ENCODE measurements at regions of chr2 and their contacts with region 1.

Region 1: GRCh38 chr2:26244309-26245121 is at the starts of genes HADHA and HADHB:
- ATAC-seq: peak; percentile 86 to 93 (median 90)
- H3K4me3 ChIP-seq: peak within 1 kb of the TSS; percentile 64 to 87 (median 85)
- H3K27ac ChIP-seq: peak within 1 kb of the TSS; percentile 100
- H3K4me1 ChIP-seq: peaks cover 3 to 14% of the 10 kb centered on the region in 2 donors
- total RNA-seq, gene HADHA: 75.1 to 152 (median 113) TPM
- total RNA-seq, gene HADHB: 29.2 to 144 (median 71.6) TPM

Region 2: GRCh38 chr2:26469092-26469710 is 224.7 kb after region 1 on chr2:
- in situ Hi-C with region 1: loop called in 1 of 9 experiments (anchors 25 kb)
- ATAC-seq: peak in 3 of 8 experiments; percentile 18 to 76 (median 43)
- H3K4me3 ChIP-seq: no peak overlapping the region
- H3K27ac ChIP-seq: no peak overlapping the region
- H3K4me1 ChIP-seq: no peaks in the 10 kb centered on the region